Ascending aorta (tissue), 2 donors: ENCODE measurements at regions of chr12 and their contacts with region 1.

Region 1: GRCh38 chr12:13100882-13101769 is 2.3 kb downstream of the GSG1 start:
- DNase-seq: peak; percentile 90 to 98
- H3K4me3 ChIP-seq: peak overlapping the region; percentile 53 to 63
- H3K27ac ChIP-seq: peak overlapping the region; percentile 92 to 94
- H3K4me1 ChIP-seq: peaks cover 10 to 42% of the 10 kb centered on the region in 2 donors
- H3K27me3 ChIP-seq: no peaks in the 10 kb centered on the region
- CTCF ChIP-seq: no peak

Region 2: GRCh38 chr12:12724661-12725545 is 376.2 kb before region 1 on chr12:
- intact Hi-C with region 1: loop called (anchors 10 kb)
- DNase-seq: peak; percentile 88 to 98
- H3K4me3 ChIP-seq: peak overlapping the region; percentile 70 to 75
- H3K27ac ChIP-seq: peak overlapping the region; percentile 96 to 97
- H3K4me1 ChIP-seq: peaks cover 3 to 25% of the 10 kb centered on the region in 2 donors
- H3K27me3 ChIP-seq: no peaks in the 10 kb centered on the region
- CTCF ChIP-seq: peak in 2 of 3 experiments; percentile 7

Region 3: GRCh38 chr12:12813120-12814101 is 287.7 kb before region 1 on chr12 and contains the start of gene DDX47:
- intact Hi-C with region 1: loop called (anchors 10 kb)
- DNase-seq: peak; percentile 79 to 98
- H3K4me3 ChIP-seq: peak within 1 kb of the TSS; percentile 76 to 90
- H3K27ac ChIP-seq: peak within 1 kb of the TSS; percentile 59 to 61
- H3K4me1 ChIP-seq: peaks cover 5 to 10% of the 10 kb centered on the region in 2 donors
- H3K27me3 ChIP-seq: no peaks in the 10 kb centered on the region
- CTCF ChIP-seq: peak; percentile 95 to 98 (median 97)
- total RNA-seq, gene DDX47: 36.4 TPM

Region 4: GRCh38 chr12:12916135-12916944 is 184.8 kb before region 1 on chr12:
- intact Hi-C with region 1: loop called (anchors 5 kb)
- DNase-seq: peak; percentile 65 to 95
- H3K4me3 ChIP-seq: no peak overlapping the region
- H3K27ac ChIP-seq: peak overlapping the region; percentile 47 to 64
- H3K4me1 ChIP-seq: peaks cover 0 to 13% of the 10 kb centered on the region in 2 donors
- H3K27me3 ChIP-seq: no peaks in the 10 kb centered on the region
- CTCF ChIP-seq: peak; percentile 93 to 97 (median 96)

Region 5: GRCh38 chr12:12964255-12964654 is 136.9 kb before region 1 on chr12:
- intact Hi-C with region 1: no loop called
- DNase-seq: no peak
- H3K4me3 ChIP-seq: no peak overlapping the region
- H3K27ac ChIP-seq: no peak overlapping the region
- H3K4me1 ChIP-seq: no peaks in the 10 kb centered on the region
- H3K27me3 ChIP-seq: no peaks in the 10 kb centered on the region
- CTCF ChIP-seq: no peak

Region 6: DNA sequence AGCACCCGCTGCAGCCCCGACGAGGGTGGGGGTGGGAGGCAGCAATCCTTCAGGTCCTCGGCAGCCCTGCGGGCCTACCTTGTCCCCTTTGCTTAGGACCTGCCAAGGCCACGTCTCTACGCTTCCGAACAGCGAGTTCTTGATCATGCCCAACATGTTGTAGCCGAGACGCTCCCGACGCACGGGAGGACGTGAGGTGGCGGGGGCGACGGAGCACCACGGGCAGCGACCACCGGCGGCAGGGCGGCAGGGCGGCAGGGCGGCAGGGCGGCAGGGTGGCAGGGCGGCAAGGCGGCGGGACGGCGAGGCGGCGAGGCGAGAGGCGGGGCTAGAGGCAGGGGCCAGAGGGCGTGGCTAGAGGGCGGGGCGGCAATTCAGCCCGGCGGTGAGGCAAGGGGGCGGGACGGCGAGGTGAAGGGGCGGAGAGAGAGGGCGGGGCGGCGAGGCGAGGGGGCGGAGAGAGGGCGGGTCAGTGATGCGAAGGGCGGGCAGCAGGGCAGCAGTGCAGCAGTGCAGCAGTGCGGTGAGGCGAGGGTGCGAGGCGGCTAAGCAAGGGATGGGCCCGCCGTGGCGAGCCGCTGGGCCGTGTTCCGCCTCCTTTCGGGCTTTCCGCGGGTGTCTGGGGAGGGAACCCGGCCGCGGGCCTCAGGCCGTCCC is 101.0 kb before region 1 on chr12 and contains the start of gene HEBP1:
- intact Hi-C with region 1: loop called (anchors 1 kb)
- DNase-seq: peak; percentile 65 to 96
- H3K4me3 ChIP-seq: peak within 1 kb of the TSS; percentile 81 to 85
- H3K27ac ChIP-seq: peak within 1 kb of the TSS; percentile 93 to 97
- H3K4me1 ChIP-seq: peaks cover 10 to 25% of the 10 kb centered on the region in 2 donors
- H3K27me3 ChIP-seq: no peaks in the 10 kb centered on the region
- CTCF ChIP-seq: no peak
- total RNA-seq, gene HEBP1: 56.6 TPM

Region 7: DNA sequence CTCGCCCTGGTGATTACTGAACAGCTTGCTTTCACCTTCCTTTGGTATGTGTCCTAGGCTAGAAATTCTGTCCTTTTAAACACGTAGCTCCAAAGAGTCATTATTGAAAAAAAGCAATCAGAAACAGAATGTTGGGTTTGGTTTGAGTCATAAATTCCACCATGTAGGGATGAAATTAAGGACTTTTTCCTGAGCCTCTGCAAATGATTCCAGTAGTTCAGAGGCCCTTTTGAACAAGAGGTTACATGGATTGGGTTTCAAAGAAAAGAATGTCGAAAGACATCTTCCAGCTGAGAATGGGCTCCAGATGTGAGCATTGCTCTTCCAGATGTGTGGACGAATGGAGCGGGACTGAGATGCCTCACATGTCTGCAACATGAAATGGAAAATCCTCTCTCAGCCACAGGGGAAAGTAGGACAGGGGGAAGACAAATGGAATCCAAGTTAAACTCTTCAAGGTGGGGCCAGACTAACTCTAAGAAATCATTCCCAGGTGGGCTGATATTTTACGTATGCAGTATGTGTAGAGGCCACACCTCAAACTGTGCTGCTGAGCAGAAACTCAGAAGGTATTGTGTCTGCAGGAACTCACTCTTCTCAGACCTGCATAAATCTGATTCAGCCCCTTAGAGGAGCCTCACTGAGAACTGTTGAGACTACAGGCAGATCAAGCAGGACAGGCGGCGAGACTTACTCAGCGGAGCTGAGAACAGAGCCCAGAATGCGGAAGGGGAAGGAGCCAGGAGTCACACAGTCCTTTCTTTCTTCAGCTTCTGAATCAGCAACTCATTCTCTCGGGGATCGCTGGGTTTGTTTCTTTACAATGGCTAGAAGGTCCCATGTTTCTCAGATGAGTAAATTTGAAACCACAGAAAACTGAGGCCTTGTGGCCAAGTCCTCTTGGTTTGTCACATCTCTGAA is 72.1 kb after region 1 on chr12:
- intact Hi-C with region 1: loop called (anchors 2 kb)
- DNase-seq: peak; percentile 41 to 87
- H3K4me3 ChIP-seq: no peak overlapping the region
- H3K27ac ChIP-seq: peak overlapping the region; percentile 20 to 23
- H3K4me1 ChIP-seq: no peaks in the 10 kb centered on the region
- H3K27me3 ChIP-seq: no peaks in the 10 kb centered on the region
- CTCF ChIP-seq: no peak

Region 8: GRCh38 chr12:13211859-13212664 is 110.9 kb after region 1 on chr12:
- intact Hi-C with region 1: loop called (anchors 1 kb)
- DNase-seq: peak in 1 of 2 donors; percentile 84
- H3K4me3 ChIP-seq: no peak overlapping the region
- H3K27ac ChIP-seq: no peak overlapping the region
- H3K4me1 ChIP-seq: peaks cover 0 to 10% of the 10 kb centered on the region in 2 donors
- H3K27me3 ChIP-seq: no peaks in the 10 kb centered on the region
- CTCF ChIP-seq: peak; percentile 71 to 86 (median 78)